MCF 10A (cell line): ENCODE measurements at regions of chr2 and their contacts with region 1.

Region 1: DNA sequence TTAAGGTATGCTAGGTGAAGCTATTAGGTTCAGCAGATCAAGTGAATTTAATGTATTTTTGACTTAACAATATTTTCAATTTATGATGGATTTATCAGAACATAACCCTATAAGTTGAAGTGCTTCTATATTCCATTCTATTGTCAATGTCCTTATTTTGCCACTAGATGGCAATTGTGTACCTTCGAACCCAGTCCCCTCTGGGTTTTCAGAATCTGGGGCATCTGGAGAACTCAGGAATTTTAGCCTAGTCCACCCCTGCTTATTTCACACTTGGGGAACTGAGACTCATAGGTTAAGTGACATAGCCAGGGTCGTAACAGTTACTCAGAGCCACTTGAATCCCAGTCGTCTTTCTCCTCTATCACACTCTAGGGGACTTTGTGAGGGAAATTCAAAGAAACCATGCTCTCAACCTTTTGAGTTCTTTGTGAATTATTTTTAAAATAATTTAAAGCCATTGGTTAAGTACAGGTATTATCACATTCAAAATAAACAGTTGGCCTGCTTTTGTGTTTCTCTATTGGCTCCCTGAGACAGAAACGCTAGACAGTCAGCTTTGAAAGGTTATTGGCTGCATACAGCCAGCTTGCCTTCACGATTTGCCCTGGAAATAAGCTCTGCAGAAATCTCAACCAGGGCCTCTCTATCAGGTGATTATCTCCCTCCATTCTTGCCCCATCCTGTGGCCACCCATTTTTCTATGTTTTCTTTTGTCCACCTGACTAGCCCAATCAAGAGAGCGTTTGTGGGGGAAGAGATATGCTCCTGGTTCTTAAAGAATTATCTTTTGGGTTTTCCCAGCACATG is 145.0 kb downstream of the TTC27 start:
- DNase-seq: peak; percentile 59
- H3K4me3 Mint-ChIP-seq: no peak overlapping the region
- H3K27ac Mint-ChIP-seq: no peak overlapping the region
- H3K4me1 Mint-ChIP-seq: no peaks in the 10 kb centered on the region
- H3K27me3 Mint-ChIP-seq: no peaks in the 10 kb centered on the region
- CTCF ChIP-seq: peak; percentile 82

Region 2: GRCh38 chr2:32553829-32554432 is 218.9 kb before region 1 on chr2:
- CTCF ChIA-PET with region 1: no interaction called
- POLR2A ChIA-PET with region 1: no interaction called
- intact Hi-C with region 1: loop called (anchors 10 kb)
- DNase-seq: peak; percentile 52
- H3K4me3 Mint-ChIP-seq: no peak overlapping the region
- H3K27ac Mint-ChIP-seq: no peak overlapping the region
- H3K4me1 Mint-ChIP-seq: no peaks in the 10 kb centered on the region
- H3K27me3 Mint-ChIP-seq: no peaks in the 10 kb centered on the region
- CTCF ChIP-seq: peak; percentile 49

Region 3: DNA sequence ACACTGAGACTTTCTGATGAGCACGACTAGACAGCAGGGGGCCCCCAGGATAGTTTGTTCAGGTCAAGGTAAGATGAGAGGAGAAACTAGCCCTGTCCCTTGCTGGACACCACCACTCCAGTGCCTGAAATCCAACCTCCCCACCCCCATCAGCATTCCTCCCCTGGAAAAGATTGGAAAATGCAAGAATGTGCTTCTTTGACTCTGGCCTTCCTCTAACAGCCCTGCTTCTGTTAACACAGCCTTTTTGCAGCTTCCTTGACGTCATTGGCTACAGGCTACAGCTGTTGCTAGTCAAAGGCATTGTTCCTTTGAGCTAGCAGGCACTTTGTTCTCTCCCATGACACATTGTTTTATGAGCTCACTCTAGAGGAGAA is 153.9 kb after region 1 on chr2:
- CTCF ChIA-PET with region 1: no interaction called
- POLR2A ChIA-PET with region 1: no interaction called
- intact Hi-C with region 1: no loop called
- DNase-seq: no peak
- H3K4me3 Mint-ChIP-seq: no peak overlapping the region
- H3K27ac Mint-ChIP-seq: no peak overlapping the region
- H3K4me1 Mint-ChIP-seq: no peaks in the 10 kb centered on the region
- H3K27me3 Mint-ChIP-seq: peaks cover 16% of the 10 kb centered on the region
- CTCF ChIP-seq: no peak

Region 4: GRCh38 chr2:32946314-32947075 is 173.7 kb after region 1 on chr2 and contains the start of gene LTBP1:
- CTCF ChIA-PET with region 1: interaction called, 6 read pairs
- POLR2A ChIA-PET with region 1: interaction called, 4 read pairs
- intact Hi-C with region 1: loop called (anchors 1 kb)
- DNase-seq: peak; percentile 65
- H3K4me3 Mint-ChIP-seq: peak within 1 kb of the TSS; percentile 70
- H3K27ac Mint-ChIP-seq: no peak within 1 kb of the TSS
- H3K4me1 Mint-ChIP-seq: no peaks in the 10 kb centered on the region
- H3K27me3 Mint-ChIP-seq: no peaks in the 10 kb centered on the region
- CTCF ChIP-seq: peak; percentile 71
- total RNA-seq, gene LTBP1: 99.0 and 119 TPM in 2 replicates

Region 5: DNA sequence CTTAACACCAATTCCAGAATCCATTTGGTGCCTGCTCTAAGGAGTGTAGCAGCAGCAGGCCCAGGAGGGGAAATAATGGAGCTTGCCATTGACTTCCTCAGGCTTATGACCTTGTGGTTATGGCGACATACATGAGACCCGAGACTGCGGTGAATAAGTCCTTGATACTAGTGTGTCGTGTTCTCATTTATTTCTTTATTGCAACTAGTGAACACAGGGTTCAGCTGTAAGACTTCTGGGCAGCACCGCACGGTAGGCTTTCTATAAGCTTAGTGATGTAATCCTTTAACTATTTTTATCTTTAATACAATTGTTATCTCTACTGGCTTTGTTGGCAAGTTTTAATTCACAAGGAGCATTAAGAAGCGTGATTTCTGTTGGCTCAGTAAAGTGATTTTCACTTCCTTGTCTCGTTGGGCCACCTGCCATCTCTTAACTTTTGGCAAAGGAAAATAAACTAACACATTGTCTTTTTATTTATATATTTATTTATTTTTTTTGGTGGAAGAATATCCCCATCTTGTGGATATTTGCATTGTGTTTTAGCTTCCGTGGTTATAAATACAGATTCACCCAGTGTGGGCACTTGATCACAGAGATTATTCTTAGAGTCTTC is 313.7 kb after region 1 on chr2:
- CTCF ChIA-PET with region 1: interaction called, 7 read pairs
- POLR2A ChIA-PET with region 1: no interaction called
- intact Hi-C with region 1: loop called (anchors 2 kb)
- DNase-seq: no peak
- H3K4me3 Mint-ChIP-seq: no peak overlapping the region
- H3K27ac Mint-ChIP-seq: no peak overlapping the region
- H3K4me1 Mint-ChIP-seq: peaks cover 10% of the 10 kb centered on the region
- H3K27me3 Mint-ChIP-seq: no peaks in the 10 kb centered on the region
- CTCF ChIP-seq: peak; percentile 20

Region 6: GRCh38 chr2:33275689-33276444 is 503.0 kb after region 1 on chr2:
- CTCF ChIA-PET with region 1: interaction called, 4 read pairs
- POLR2A ChIA-PET with region 1: no interaction called
- intact Hi-C with region 1: loop called (anchors 2 kb)
- DNase-seq: peak; percentile 93
- H3K4me3 Mint-ChIP-seq: peak overlapping the region; percentile 54
- H3K27ac Mint-ChIP-seq: peak overlapping the region; percentile 76
- H3K4me1 Mint-ChIP-seq: peaks cover 11% of the 10 kb centered on the region
- H3K27me3 Mint-ChIP-seq: no peaks in the 10 kb centered on the region
- CTCF ChIP-seq: no peak

Region 7: DNA sequence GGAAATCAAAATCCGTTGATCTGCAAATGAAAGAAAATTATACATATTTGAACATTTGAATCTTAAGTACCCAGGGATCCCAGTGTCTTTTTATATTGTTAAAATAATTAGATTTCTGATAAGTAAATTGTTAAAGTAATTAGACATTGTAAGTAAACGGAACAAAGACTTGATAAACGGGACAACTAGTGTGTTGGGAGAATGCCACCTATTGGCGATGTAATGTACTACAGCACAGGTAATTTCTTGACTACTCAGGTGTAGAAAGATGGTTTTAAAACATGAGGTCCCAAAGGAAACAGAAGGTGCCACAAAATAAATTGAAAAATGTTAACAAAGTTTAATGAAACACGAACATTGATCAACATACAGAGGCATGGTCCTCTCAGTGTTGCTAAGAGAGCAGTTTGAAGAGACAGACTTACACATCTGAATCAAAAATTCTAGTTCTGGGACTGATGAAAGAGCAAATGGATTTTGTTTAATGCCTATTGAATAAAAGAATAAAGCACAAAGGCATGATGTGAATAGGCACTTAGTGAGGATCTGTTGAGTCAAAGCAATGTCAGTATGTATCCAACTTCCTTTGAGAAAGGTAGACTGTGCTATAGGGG is 600.2 kb after region 1 on chr2:
- CTCF ChIA-PET with region 1: interaction called, 7 read pairs
- POLR2A ChIA-PET with region 1: no interaction called
- intact Hi-C with region 1: loop called (anchors 1 kb)
- DNase-seq: peak; percentile 73
- H3K4me3 Mint-ChIP-seq: no peak overlapping the region
- H3K27ac Mint-ChIP-seq: no peak overlapping the region
- H3K4me1 Mint-ChIP-seq: peaks cover 13% of the 10 kb centered on the region
- H3K27me3 Mint-ChIP-seq: no peaks in the 10 kb centered on the region
- CTCF ChIP-seq: peak; percentile 72

Region 8: GRCh38 chr2:33441235-33441810 is 668.5 kb after region 1 on chr2:
- CTCF ChIA-PET with region 1: no interaction called
- POLR2A ChIA-PET with region 1: no interaction called
- intact Hi-C with region 1: loop called (anchors 1 kb)
- DNase-seq: peak; percentile 71
- H3K4me3 Mint-ChIP-seq: no peak overlapping the region
- H3K27ac Mint-ChIP-seq: no peak overlapping the region
- H3K4me1 Mint-ChIP-seq: no peaks in the 10 kb centered on the region
- H3K27me3 Mint-ChIP-seq: no peaks in the 10 kb centered on the region
- CTCF ChIP-seq: peak; percentile 80